IMR-90 (cell line): ENCODE measurements at regions of chr3 and their contacts with region 1.

Region 1: DNA sequence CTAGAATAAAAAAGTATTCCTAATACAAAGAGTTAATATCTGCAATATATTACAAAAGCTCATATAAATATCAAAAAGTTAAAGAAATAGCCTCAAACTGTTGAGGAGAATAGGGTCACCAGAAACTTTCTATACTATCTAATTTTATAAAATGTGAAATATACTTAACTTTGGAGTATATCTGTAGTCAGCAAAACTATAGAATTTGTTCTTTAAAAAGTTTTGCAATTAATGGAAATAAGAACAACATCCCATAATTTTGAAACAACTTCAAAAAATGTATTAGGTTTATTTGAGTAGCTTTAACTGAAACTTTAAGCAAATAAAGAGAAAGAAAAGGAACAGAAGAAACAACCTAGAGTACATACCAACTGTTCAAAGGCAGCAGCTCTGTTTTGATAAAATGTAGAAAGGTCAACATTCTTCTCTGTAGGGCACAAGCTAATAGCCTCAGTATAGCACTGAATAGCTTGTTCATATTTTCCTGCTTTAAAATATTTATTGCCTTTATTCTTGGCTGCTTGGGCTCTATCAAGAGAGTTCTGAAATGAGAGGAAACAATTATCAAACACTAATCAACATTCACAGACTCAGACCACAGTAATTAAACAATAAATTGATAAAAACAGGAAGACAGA is 14.3 kb downstream of the TOMM70 start:
- DNase-seq: peak; percentile 35
- ATAC-seq: peak; percentile 82
- H3K4me3 ChIP-seq: no peak overlapping the region
- H3K27ac ChIP-seq: peak overlapping the region; percentile 76; the same call in 1 of the 2 replicates
- H3K4me1 ChIP-seq: peaks cover 13% of the 10 kb centered on the region
- H3K27me3 ChIP-seq: no peaks in the 10 kb centered on the region
- CTCF ChIP-seq: no peak
- POLR2A ChIP-seq: no peak
- RAD21 ChIP-seq: no peak

Region 2: DNA sequence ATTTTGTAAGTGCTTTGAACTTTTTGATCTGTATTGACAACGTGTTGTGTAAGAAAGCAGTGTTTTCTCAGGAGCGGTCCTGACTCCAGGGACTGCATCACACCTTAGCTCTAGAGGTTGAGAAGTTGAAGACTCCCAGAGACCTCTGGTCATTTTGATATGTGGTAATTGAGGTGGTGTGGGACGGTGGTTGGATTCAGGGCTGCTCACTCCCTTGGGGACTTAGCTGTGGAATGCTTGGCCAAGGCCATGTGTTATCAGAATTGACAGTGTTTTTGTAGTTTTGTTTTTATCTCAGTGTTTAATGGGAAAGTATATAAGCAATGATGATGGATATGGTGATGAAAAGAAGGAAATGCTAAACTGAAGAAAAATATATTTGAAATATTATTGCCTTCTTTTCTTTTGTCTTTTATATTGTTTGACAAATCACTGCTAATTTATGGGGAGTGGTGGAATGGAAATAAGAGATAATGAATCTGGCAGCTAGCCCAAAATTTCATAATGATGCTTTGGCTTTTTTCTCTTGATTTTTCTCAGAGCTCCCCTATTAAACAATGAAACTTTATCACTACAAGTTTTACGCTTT is 552.8 kb before region 1 on chr3:
- CTCF ChIA-PET with region 1: no interaction called
- POLR2A ChIA-PET with region 1: no interaction called
- dilution Hi-C with region 1: no loop called
- in situ Hi-C with region 1: no loop called
- intact Hi-C with region 1: loop called (anchors 10 kb)
- DNase-seq: no peak
- ATAC-seq: no peak
- H3K4me3 ChIP-seq: no peak overlapping the region
- H3K27ac ChIP-seq: no peak overlapping the region
- H3K4me1 ChIP-seq: peaks cover 2% of the 10 kb centered on the region; the same call in 1 of the 2 replicates
- H3K27me3 ChIP-seq: no peaks in the 10 kb centered on the region
- CTCF ChIP-seq: no peak
- POLR2A ChIP-seq: no peak
- RAD21 ChIP-seq: no peak

Region 3: DNA sequence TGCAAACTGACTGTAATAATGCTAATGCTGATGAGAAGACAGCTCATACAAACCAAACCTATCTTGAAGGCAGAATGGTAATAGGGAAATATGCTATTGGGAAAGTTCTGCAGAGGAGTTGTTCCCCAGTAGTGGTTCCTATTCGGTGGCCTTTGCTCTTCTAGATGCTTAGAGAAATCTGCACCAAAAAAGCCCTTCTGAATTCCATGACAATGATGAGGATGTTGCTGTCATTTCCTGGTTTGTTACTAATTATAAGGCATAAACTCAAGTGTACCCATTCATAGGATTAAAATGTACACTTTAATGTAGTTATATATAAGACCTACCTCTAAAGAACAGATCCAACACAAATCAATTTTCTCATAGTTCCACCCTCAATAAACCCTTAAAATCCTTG is 15.8 kb before region 1 on chr3:
- CTCF ChIA-PET with region 1: no interaction called
- POLR2A ChIA-PET with region 1: no interaction called
- dilution Hi-C with region 1: no loop called
- in situ Hi-C with region 1: no loop called
- intact Hi-C with region 1: loop called (anchors 2 kb)
- DNase-seq: peak; percentile 38
- ATAC-seq: no peak
- H3K4me3 ChIP-seq: no peak overlapping the region
- H3K27ac ChIP-seq: no peak overlapping the region
- H3K4me1 ChIP-seq: 0 out of 2 replicates have a peak, but pooled peaks cover 2% of the 10 kb centered on the region
- H3K27me3 ChIP-seq: no peaks in the 10 kb centered on the region
- CTCF ChIP-seq: no peak
- POLR2A ChIP-seq: no peak
- RAD21 ChIP-seq: no peak

Region 4: GRCh38 chr3:100492059-100493006 is 105.8 kb after region 1 on chr3 and contains the start of gene TMEM45A:
- CTCF ChIA-PET with region 1: no interaction called
- POLR2A ChIA-PET with region 1: interaction called, 10 read pairs
- dilution Hi-C with region 1: no loop called
- in situ Hi-C with region 1: no loop called
- intact Hi-C with region 1: no loop called
- DNase-seq: peak; percentile 95
- ATAC-seq: peak; percentile 99
- H3K4me3 ChIP-seq: peak within 1 kb of the TSS; percentile 79
- H3K27ac ChIP-seq: peak within 1 kb of the TSS; percentile 96
- H3K4me1 ChIP-seq: peaks cover 3% of the 10 kb centered on the region; the same call in 1 of the 2 replicates
- H3K27me3 ChIP-seq: 0 out of 2 replicates have a peak, but pooled peaks cover 2% of the 10 kb centered on the region
- CTCF ChIP-seq: no peak
- POLR2A ChIP-seq: peak; percentile 96
- RAD21 ChIP-seq: no peak
- total RNA-seq, gene TMEM45A: 13.6 and 20.8 TPM in 2 replicates

Region 5: DNA sequence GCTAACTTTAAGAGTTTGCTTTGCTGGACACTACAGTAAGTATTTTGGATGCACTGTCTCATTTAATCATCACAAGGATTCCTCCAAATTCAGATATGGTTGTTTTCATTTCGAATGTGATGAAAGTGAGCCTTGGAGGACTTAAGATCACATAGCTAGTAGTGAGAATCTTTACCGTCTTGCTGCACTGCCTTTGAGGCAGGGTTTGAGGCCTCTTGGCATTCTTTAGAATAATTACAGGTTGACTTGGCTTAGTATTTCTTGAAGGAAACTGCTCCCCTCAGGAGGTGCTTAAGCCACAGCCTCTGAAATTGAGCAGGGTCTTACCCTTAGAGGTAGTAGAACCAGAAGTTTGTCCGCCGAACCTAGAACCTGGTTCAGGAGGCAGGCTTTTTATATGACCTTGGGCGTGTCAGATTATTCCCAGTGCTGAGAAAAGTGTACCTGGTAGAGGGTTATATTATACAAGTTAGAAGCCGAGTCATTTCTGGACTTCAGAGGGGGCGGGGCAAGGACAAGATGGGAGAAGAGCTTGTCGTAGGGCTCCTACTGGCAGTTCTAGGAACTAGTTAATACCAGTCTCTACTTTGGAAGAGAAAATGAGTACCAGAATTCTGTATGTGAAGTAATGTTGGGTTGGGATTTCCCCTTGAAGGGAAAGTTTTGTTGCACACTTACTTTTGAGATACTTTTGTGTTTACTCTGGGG is 323.9 kb after region 1 on chr3:
- CTCF ChIA-PET with region 1: no interaction called
- POLR2A ChIA-PET with region 1: no interaction called
- dilution Hi-C with region 1: no loop called
- in situ Hi-C with region 1: no loop called
- intact Hi-C with region 1: loop called (anchors 10 kb)
- DNase-seq: peak; percentile 77
- ATAC-seq: peak; percentile 25
- H3K4me3 ChIP-seq: peak overlapping the region; percentile 98
- H3K27ac ChIP-seq: peak overlapping the region; percentile 92
- H3K4me1 ChIP-seq: no peaks in the 10 kb centered on the region; the same call in 1 of the 2 replicates
- H3K27me3 ChIP-seq: no peaks in the 10 kb centered on the region
- CTCF ChIP-seq: peak; percentile 40
- POLR2A ChIP-seq: no peak
- RAD21 ChIP-seq: 0 out of 2 replicates have a peak, but pooled peaks have one; percentile 8